Naive thymus-derived CD8-positive, alpha-beta T cell (primary cell): ENCODE measurements at regions of chr16 and their contacts with region 1.

Region 1: DNA sequence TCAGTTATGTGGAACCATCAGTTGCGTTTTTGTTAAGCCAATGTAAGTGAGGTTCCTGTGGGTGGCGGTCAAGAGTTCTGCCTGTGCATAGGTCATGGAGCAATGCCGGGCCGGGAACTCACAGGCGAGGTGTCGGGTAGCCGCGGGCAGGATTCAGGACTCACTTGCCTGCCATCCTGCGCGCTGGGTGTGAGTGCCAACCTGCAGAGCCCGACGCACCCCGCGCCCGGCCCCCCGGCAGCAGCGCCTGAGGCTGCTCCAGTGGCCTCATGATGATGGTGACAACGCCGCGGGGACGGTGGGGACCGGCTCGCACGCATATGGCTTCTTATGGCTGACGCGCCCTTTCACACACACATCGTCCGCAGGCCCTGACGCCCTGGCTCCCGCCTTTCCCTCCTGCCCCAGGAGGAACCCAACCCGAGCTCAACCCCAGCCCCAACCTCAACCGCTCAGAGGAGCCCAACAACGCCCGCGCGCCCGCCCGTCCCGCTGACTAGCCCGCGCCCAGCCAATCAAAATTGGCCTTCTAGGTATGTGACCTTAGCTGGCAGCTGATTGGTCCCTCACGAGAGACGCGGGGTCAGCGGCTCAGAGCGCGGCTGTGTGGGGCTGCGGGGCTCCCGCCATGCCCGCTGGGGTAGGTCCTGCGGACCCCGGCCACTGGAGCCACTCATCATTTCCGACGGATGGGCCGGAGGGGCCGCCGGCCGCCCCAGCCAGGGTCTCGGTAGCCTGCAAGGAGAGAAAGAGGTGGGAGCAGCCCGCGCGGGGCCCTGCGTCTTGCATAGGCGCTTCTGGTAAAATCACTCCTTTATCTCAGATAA is at the start of gene C16orf95:
- DNase-seq: peak; percentile 90 to 100 (median 96)
- ATAC-seq: peak; percentile 92 to 93
- H3K4me3 Mint-ChIP-seq: peak within 1 kb of the TSS; percentile 93 to 99 (median 97)
- H3K27ac Mint-ChIP-seq: peak within 1 kb of the TSS; percentile 88 to 99 (median 96)
- H3K4me1 Mint-ChIP-seq: peaks cover 5 to 21% (median 18%) of the 10 kb centered on the region in 4 donors
- H3K27me3 Mint-ChIP-seq: peaks cover 0 to 3% (median 0%) of the 10 kb centered on the region in 5 donors
- polyA plus RNA-seq, gene C16orf95: 1.5 to 4.9 (median 3.2) TPM

Region 2: GRCh38 chr16:87288753-87289362 is 28.3 kb before region 1 on chr16:
- POLR2A ChIA-PET with region 1: no interaction called
- DNase-seq: no peak
- ATAC-seq: no peak
- H3K4me3 Mint-ChIP-seq: no peak overlapping the region
- H3K27ac Mint-ChIP-seq: no peak overlapping the region
- H3K4me1 Mint-ChIP-seq: no peaks in the 10 kb centered on the region
- H3K27me3 Mint-ChIP-seq: no peaks in the 10 kb centered on the region

Region 3: GRCh38 chr16:87305505-87306391 is 11.4 kb before region 1 on chr16:
- POLR2A ChIA-PET with region 1: no interaction called
- DNase-seq: no peak
- ATAC-seq: no peak
- H3K4me3 Mint-ChIP-seq: no peak overlapping the region
- H3K27ac Mint-ChIP-seq: no peak overlapping the region
- H3K4me1 Mint-ChIP-seq: peaks cover 0 to 6% (median 3%) of the 10 kb centered on the region in 4 donors
- H3K27me3 Mint-ChIP-seq: no peaks in the 10 kb centered on the region

Region 4: GRCh38 chr16:87332150-87332549 is 15.0 kb after region 1 on chr16:
- POLR2A ChIA-PET with region 1: interaction called, 10 read pairs
- DNase-seq: peak in 1 of 10 donors; percentile 40
- ATAC-seq: no peak
- H3K4me3 Mint-ChIP-seq: no peak overlapping the region
- H3K27ac Mint-ChIP-seq: peak overlapping the region in 1 of 10 donors; percentile 46
- H3K4me1 Mint-ChIP-seq: peaks cover 8 to 21% (median 15%) of the 10 kb centered on the region in 4 donors
- H3K27me3 Mint-ChIP-seq: no peaks in the 10 kb centered on the region

Region 5: GRCh38 chr16:87383629-87384161 is 66.6 kb after region 1 on chr16 and contains the start of gene FBXO31:
- POLR2A ChIA-PET with region 1: interaction called, 34 read pairs
- DNase-seq: peak; percentile 80 to 96 (median 92)
- ATAC-seq: peak; percentile 66 to 69
- H3K4me3 Mint-ChIP-seq: peak within 1 kb of the TSS; percentile 81 to 96 (median 92)
- H3K27ac Mint-ChIP-seq: peak within 1 kb of the TSS; percentile 91 to 100 (median 96)
- H3K4me1 Mint-ChIP-seq: peaks cover 26 to 70% (median 57%) of the 10 kb centered on the region in 4 donors
- H3K27me3 Mint-ChIP-seq: peaks cover 0 to 3% (median 0%) of the 10 kb centered on the region in 5 donors
- polyA plus RNA-seq, gene FBXO31: 15.4 to 36.4 (median 23.3) TPM

Region 6: GRCh38 chr16:87391950-87392822 is 75.0 kb after region 1 on chr16 and contains the start of gene MAP1LC3B:
- POLR2A ChIA-PET with region 1: interaction called, 10 read pairs
- DNase-seq: peak; percentile 96 to 100 (median 98)
- ATAC-seq: peak; percentile 71 to 74
- H3K4me3 Mint-ChIP-seq: peak within 1 kb of the TSS; percentile 76 to 96 (median 94)
- H3K27ac Mint-ChIP-seq: peak within 1 kb of the TSS; percentile 72 to 97 (median 94)
- H3K4me1 Mint-ChIP-seq: peaks cover 27 to 63% (median 61%) of the 10 kb centered on the region in 4 donors
- H3K27me3 Mint-ChIP-seq: no peaks in the 10 kb centered on the region
- polyA plus RNA-seq, gene MAP1LC3B: 89.9 to 117 (median 90.3) TPM